ENCODE measurements at regions of chr1 and their contacts with region 1.

Region 1: GRCh38 chr1:110538075-110538474 is 19.1 kb upstream of the KCNA10 start:
- DNase-seq: peak; percentile 61
- H3K4me3 ChIP-seq: no peak overlapping the region
- H3K27ac ChIP-seq: no peak overlapping the region
- H3K4me1 ChIP-seq: peaks cover 9% of the 10 kb centered on the region
- H3K27me3 ChIP-seq: no peaks in the 10 kb centered on the region
- CTCF ChIP-seq: peak; percentile 45

Region 2: DNA sequence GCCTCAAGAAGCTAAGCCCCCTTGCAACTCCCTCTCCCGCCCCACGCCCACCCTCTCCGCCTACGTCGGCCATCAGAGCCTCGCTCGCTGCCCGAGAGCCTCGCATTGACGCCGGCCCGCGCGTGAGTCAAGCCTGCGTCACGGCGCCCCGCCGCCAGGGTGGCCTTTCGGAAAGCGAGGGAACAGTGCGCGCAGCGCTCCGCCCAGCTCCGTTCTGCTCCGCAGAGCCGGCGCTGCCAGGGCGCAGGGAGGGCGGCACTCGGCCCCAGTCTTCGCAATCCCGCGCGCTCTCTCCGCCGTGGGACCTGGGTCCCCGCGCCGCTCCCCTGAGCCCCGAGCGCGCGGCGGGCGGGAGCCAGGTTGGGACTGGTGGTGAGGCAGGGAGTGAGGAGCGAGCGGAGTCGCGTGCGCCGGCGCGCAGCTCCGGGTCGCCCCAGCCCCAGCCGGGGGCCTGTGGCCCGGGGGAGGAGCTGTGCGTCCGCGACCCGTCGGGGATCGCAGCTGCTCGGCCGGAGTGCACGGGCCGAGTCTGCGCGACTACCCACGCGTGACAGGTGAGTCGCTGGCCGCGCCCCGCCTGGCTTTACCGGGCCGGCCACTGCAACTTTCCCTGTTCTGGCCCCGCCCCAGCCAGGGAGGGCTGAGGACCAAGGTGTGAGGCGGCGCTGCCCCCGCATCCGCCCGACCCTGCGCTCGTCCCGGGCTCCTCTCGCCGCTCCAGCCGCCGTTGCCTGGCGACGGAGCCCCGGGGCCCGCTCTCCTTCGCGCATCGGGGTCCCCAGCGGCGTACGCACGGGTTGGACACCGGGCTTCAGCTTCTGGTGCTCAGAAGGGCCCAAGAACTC is 387.5 kb before region 1 on chr1 and contains the start of gene SLC6A17:
- CTCF ChIA-PET with region 1: interaction called, 10 read pairs
- POLR2A ChIA-PET with region 1: no interaction called
- intact Hi-C with region 1: no loop called
- DNase-seq: peak; percentile 62
- H3K4me3 ChIP-seq: peak within 1 kb of the TSS; percentile 21
- H3K27ac ChIP-seq: no peak within 1 kb of the TSS
- H3K4me1 ChIP-seq: peaks cover 7% of the 10 kb centered on the region
- H3K27me3 ChIP-seq: peaks cover 98% of the 10 kb centered on the region
- CTCF ChIP-seq: no peak
- total RNA-seq, gene SLC6A17: not detected in 2 replicates

Measured in A673 (cell line).